Activated B cell treated with CpG ODN at 0.5 μM for 24 hours (primary cell): ENCODE measurements at regions of chr4 and their contacts with region 1.

Region 1: GRCh38 chr4:113394730-113395530 is 345.5 kb downstream of the ANK2 start:
- DNase-seq: no peak
- ATAC-seq: peak; percentile 89
- H3K4me3 Mint-ChIP-seq: no peak overlapping the region
- H3K27ac Mint-ChIP-seq: no peak overlapping the region
- H3K4me1 Mint-ChIP-seq: no peaks in the 10 kb centered on the region
- H3K27me3 Mint-ChIP-seq: peaks cover 2% of the 10 kb centered on the region
- CTCF ChIP-seq: peak; percentile 24

Region 2: GRCh38 chr4:112956484-112956896 is 438.4 kb before region 1 on chr4:
- CTCF ChIA-PET with region 1: no interaction called
- POLR2A ChIA-PET with region 1: no interaction called
- intact Hi-C with region 1: no loop called
- DNase-seq: no peak
- ATAC-seq: no peak
- H3K4me3 Mint-ChIP-seq: no peak overlapping the region
- H3K27ac Mint-ChIP-seq: no peak overlapping the region
- H3K4me1 Mint-ChIP-seq: peaks cover under 1% of the 10 kb centered on the region
- H3K27me3 Mint-ChIP-seq: no peaks in the 10 kb centered on the region
- CTCF ChIP-seq: no peak

Region 3: GRCh38 chr4:113781439-113782040 is 386.6 kb after region 1 on chr4:
- CTCF ChIA-PET with region 1: interaction called, 5 read pairs
- POLR2A ChIA-PET with region 1: no interaction called
- intact Hi-C with region 1: loop called (anchors 2 kb)
- DNase-seq: no peak
- ATAC-seq: no peak
- H3K4me3 Mint-ChIP-seq: no peak overlapping the region
- H3K27ac Mint-ChIP-seq: no peak overlapping the region
- H3K4me1 Mint-ChIP-seq: no peaks in the 10 kb centered on the region
- H3K27me3 Mint-ChIP-seq: no peaks in the 10 kb centered on the region
- CTCF ChIP-seq: peak; percentile 76

Region 4: DNA sequence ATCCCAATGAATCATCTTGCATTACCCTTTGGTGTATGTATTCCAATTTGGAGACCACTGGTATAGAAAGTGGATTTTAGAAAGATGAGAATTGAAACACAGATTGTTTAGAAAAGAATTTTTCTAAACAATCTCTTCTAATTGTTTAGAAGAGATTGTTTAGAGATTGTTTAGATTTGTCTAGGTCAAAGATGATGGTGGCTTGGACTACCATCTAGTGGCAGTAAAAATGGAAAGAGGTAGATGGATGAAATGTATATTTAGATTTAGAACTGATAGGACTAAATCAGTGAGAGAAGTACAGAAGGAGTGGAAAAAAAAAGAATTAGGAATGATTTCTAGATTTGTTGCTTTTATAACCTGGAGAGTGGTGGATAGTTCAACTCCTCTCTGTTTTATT is 513.9 kb after region 1 on chr4:
- CTCF ChIA-PET with region 1: interaction called, 5 read pairs
- POLR2A ChIA-PET with region 1: no interaction called
- intact Hi-C with region 1: loop called (anchors 1 kb)
- DNase-seq: no peak
- ATAC-seq: no peak
- H3K4me3 Mint-ChIP-seq: no peak overlapping the region
- H3K27ac Mint-ChIP-seq: no peak overlapping the region
- H3K4me1 Mint-ChIP-seq: no peaks in the 10 kb centered on the region
- H3K27me3 Mint-ChIP-seq: peaks cover 2% of the 10 kb centered on the region
- CTCF ChIP-seq: no peak

Region 5: GRCh38 chr4:114076899-114077570 is 682.1 kb after region 1 on chr4:
- CTCF ChIA-PET with region 1: interaction called, 23 read pairs
- POLR2A ChIA-PET with region 1: no interaction called
- intact Hi-C with region 1: no loop called
- DNase-seq: no peak
- ATAC-seq: no peak
- H3K4me3 Mint-ChIP-seq: no peak overlapping the region
- H3K27ac Mint-ChIP-seq: no peak overlapping the region
- H3K4me1 Mint-ChIP-seq: no peaks in the 10 kb centered on the region
- H3K27me3 Mint-ChIP-seq: peaks cover 3% of the 10 kb centered on the region
- CTCF ChIP-seq: no peak

Region 6: GRCh38 chr4:114386637-114387233 is 991.8 kb after region 1 on chr4:
- CTCF ChIA-PET with region 1: interaction called, 25 read pairs
- POLR2A ChIA-PET with region 1: no interaction called
- intact Hi-C with region 1: loop called (anchors 1 kb)
- DNase-seq: no peak
- ATAC-seq: peak; percentile 40
- H3K4me3 Mint-ChIP-seq: no peak overlapping the region
- H3K27ac Mint-ChIP-seq: no peak overlapping the region
- H3K4me1 Mint-ChIP-seq: no peaks in the 10 kb centered on the region
- H3K27me3 Mint-ChIP-seq: peaks cover 16% of the 10 kb centered on the region
- CTCF ChIP-seq: peak; percentile 80

Region 7: DNA sequence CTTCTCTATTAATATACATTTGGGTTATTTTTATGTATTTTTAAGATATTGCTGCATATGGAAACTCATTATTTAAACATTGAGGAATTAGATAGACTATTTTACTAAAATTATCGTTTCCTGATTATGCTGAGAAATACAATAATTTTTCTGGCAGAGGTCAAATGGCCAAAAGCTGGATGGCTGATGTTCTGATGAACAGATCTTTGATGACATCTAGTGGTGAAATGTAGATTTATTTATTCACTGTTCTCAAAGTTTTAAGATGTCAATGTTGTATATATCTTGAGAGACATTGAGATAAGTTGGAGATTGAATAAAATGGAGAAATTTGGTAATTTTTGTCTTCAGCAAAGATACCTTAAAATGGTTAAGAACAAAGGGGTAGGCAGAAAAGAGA is 1299.8 kb after region 1 on chr4:
- CTCF ChIA-PET with region 1: interaction called, 4 read pairs
- POLR2A ChIA-PET with region 1: no interaction called
- intact Hi-C with region 1: loop called (anchors 1 kb)
- DNase-seq: no peak
- ATAC-seq: no peak
- H3K4me3 Mint-ChIP-seq: no peak overlapping the region
- H3K27ac Mint-ChIP-seq: no peak overlapping the region
- H3K4me1 Mint-ChIP-seq: peaks cover 14% of the 10 kb centered on the region
- H3K27me3 Mint-ChIP-seq: no peaks in the 10 kb centered on the region
- CTCF ChIP-seq: peak; percentile 43